Gastrocnemius medialis (tissue), 4 donors: ENCODE measurements at regions of chr9 and their contacts with region 1.

Region 1: DNA sequence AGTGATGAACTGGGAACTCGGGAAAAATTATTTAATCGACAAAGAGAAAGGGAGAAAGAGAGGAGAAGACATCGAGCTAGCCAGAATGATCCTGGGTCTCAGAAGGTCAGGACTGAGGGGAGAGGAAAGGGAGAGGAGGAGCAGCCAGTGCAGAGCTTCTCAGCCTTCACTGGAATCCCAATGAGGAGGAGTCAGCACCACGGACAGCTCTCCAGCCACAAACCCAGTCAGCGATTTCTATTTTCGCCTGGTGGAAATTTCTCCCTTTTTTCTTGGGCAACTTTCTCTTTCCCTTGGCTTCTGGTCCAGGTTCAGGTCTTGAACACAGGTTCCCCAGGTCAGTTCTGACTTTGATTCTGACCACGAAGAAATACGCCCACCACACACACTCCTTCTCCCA is 1.6 kb upstream of the BRINP1 start:
- DNase-seq: no peak
- ATAC-seq: no peak
- H3K4me3 ChIP-seq: no peak overlapping the region
- H3K27ac ChIP-seq: no peak overlapping the region
- H3K4me1 ChIP-seq: no peaks in the 10 kb centered on the region
- H3K27me3 ChIP-seq: peaks cover 31 to 34% (median 33%) of the 10 kb centered on the region in 3 donors
- CTCF ChIP-seq: no peak
- POLR2A ChIP-seq: no peak

Region 2: DNA sequence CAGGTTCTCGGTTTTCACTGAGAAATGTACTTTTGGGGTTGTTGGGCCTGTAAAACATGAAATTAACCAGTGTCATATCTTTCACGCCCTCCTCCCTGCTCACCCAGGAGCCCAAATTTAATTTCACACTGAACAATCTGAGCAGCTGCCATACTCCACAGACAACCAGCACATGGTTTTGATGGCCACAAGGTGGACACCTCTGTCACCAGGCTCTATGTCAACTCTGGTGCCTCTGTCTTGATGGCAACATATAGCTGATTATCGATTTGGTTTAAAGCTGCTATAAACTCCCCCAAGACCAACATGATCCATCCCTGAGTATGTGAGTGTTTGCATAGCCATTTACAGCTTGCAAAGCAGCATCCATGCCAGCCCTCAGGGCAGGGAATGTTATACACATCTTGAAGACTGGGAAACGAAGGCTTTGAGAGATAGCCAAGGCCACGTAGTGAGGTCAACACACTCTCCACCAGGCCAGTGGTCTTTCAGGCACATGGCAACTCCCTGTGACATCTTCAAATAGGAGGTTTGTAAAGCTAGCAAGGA is 38.7 kb after region 1 on chr9:
- in situ Hi-C with region 1: no loop called
- intact Hi-C with region 1: loop called (anchors 1 kb)
- DNase-seq: no peak
- ATAC-seq: no peak
- H3K4me3 ChIP-seq: no peak overlapping the region
- H3K27ac ChIP-seq: no peak overlapping the region
- H3K4me1 ChIP-seq: no peaks in the 10 kb centered on the region
- H3K27me3 ChIP-seq: no peaks in the 10 kb centered on the region
- CTCF ChIP-seq: no peak
- POLR2A ChIP-seq: no peak

Region 3: GRCh38 chr9:119453490-119453911 is 82.7 kb after region 1 on chr9:
- in situ Hi-C with region 1: no loop called
- intact Hi-C with region 1: no loop called
- DNase-seq: no peak
- ATAC-seq: no peak
- H3K4me3 ChIP-seq: no peak overlapping the region
- H3K27ac ChIP-seq: no peak overlapping the region
- H3K4me1 ChIP-seq: no peaks in the 10 kb centered on the region
- H3K27me3 ChIP-seq: no peaks in the 10 kb centered on the region
- CTCF ChIP-seq: no peak
- POLR2A ChIP-seq: no peak